Left ventricle myocardium superior (tissue), 1 donor: ENCODE measurements at regions of chr2 and their contacts with region 1.

Region 1: DNA sequence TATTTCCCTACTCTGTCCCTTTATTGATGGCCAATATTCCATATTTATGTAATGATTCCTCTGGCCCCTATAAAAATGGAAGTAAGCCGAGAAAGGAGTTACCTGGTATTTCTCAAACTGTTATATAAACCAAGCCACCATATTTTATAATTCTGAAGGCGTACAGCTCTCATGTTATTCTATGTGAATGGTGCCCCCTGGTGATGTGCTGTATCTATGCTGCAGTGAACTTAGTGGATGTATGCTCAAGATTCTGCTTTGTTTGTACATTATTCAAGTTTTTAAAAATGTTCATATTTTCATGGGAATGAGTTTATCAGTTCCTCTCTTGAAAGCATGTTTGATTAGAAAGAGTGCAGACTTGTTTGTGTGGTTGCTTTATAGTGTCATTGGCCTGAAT is 194.5 kb upstream of the LRRTM1 start:
- DNase-seq: peak; percentile 26
- ATAC-seq: peak; percentile 74

Region 2: DNA sequence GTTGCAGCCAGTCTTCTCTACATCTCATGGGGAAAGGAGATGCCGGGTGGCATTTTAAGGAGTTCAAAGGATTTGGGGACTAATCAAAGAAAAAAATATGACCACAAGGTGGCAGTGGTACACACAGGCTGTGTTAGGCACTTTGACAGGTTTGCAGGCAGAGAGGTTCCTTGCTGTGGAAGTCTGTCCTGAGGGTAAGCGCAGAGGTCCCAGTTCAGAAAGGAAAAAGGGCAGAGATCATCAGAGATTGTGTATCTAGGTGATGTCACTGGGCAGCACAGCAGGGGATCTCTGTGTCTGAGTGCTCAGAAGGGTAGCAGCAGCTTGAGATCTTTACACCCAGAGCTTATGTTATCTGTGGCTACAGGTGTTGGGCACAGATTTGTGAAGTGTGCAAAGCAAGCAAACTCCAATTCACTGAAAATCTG is 425.9 kb before region 1 on chr2:
- intact Hi-C with region 1: loop called (anchors 5 kb)
- DNase-seq: no peak
- ATAC-seq: peak; percentile 64

Region 3: DNA sequence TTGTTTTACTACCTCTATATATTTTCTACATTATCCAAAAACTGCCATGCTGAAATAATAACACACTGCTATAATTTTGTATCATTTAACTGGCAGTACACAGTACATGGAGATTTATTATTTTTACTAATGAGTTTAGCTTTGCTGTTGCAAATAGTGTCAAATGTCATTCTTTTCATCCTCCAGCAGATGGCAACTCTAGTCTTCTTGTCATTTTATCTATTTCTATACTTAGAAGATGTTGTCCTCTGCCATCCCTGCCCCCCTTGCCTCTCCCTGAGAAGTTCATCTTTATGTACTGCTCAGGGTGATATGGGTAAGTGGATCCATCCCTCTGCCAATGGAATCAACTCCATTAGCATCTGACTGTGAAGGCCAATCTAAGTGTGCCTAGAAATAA is 172.9 kb before region 1 on chr2:
- intact Hi-C with region 1: loop called (anchors 1 kb)
- DNase-seq: no peak
- ATAC-seq: peak; percentile 70

Region 4: DNA sequence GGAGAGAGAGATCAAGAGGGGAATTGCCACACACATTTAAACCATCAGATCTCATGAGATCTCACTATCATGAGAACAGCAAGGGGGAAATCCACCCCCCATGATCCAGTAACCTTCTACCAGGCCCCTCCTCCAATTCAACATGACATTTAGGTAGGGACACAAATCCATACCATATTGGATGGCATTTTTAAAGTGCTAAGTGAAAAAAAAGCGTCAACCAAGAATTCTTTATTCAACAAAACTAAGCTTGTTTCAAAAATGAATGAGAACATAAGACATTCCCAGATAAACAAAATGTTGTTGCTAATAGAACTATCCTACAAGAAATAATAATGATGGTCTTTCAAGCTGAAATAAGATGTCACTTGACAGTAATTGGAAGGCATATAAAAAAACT is 431.7 kb after region 1 on chr2:
- intact Hi-C with region 1: no loop called
- DNase-seq: no peak
- ATAC-seq: no peak